ENCODE measurements at regions of chr5 and their contacts with region 1.

Region 1: DNA sequence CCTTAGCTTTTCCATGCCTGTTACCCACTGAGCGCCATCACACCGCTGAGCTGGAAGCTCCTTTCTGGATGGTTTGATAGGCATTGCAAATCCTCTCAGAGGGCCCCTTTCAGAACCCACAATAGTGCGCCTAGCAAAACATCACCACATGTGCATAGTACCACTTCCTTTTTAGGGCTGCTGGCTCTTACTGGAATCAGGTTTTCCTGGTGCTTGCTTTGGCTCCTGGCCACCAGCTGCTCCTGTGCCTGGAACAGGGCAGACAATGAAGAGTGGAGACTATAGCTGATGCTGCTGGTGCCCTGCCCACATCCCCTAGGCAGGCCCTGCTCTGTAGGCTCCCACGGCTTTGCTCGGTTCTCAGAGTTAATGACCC is 163.6 kb upstream of the SEMA6A start:
- DNase-seq: no peak
- ATAC-seq: no peak
- H3K4me3 ChIP-seq: no peak overlapping the region
- H3K27ac ChIP-seq: no peak overlapping the region
- H3K4me1 ChIP-seq: no peaks in the 10 kb centered on the region
- H3K27me3 ChIP-seq: no peaks in the 10 kb centered on the region
- CTCF ChIP-seq: no peak
- EP300 ChIP-seq: no peak
- POLR2A ChIP-seq: no peak
- RAD21 ChIP-seq: no peak

Region 2: DNA sequence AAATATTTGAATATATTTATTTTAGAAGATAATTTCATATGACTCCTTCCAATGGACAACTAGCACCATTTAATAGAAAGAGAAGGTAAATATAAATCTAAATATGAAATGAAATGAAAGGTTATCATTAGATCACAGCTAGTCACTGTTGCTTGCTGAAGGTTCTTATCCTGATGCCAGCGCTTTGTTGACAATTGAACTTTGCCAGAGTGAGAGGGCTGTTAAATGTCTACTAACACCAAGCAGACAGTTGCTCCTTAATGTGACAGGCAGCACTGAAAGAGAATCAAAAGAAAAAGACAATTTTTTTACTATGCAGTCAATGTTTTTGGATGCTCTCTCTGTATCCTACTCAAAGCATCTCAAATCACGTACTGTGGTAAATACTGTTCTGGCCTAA is 11.0 kb before region 1 on chr5:
- CTCF ChIA-PET with region 1: interaction called, 5 read pairs
- POLR2A ChIA-PET with region 1: interaction called, 3 read pairs
- RAD21 ChIA-PET with region 1: interaction called, 3 read pairs
- SMC1A ChIA-PET with region 1: interaction called, 17 read pairs
- in situ Hi-C with region 1: no loop called
- intact Hi-C with region 1: no loop called
- DNase-seq: no peak
- ATAC-seq: no peak
- H3K4me3 ChIP-seq: no peak overlapping the region
- H3K27ac ChIP-seq: no peak overlapping the region
- H3K4me1 ChIP-seq: no peaks in the 10 kb centered on the region
- H3K27me3 ChIP-seq: no peaks in the 10 kb centered on the region
- CTCF ChIP-seq: no peak
- EP300 ChIP-seq: no peak
- POLR2A ChIP-seq: no peak
- RAD21 ChIP-seq: no peak

Measured in GM12878 (cell line).